Natural killer cell (primary cell): ENCODE measurements at regions of chr22 and their contacts with region 1.

Region 1: DNA sequence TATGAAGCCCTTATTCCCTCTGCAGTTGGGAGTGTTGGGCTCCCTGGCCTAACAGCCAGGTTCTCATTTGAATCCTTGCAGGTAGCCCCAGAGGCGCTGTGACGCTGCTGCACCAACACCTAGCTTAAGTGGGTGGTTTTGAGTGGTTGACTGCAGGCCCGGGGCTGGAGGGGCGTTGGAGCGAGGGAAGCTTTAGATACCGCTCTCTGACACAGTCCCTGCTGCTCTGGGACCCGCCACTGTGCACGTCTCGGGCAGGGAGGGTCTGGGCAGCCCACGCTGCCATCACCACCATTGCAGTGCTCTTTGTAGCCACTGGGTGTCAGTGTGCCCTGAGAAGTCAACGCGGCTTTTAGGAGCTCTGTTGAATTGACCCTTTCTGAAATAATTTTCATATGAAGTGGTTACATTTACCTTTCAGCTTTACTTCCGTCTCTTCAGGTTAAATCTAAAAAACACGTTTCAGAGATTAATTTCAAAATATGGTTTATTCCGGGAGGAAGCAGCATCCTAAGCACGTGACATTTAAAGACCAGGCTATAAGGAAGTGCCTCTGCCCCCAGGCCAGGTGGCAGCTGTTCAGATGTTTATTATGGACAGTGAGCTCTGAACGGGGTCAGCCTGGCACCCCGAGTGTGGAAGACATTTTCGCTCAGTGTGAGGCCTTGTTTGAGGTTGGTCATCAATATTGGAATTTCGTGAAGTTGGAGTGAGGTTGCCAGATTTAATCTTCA is 30.9 kb upstream of the PARVB start:
- DNase-seq: peak; percentile 47 to 82
- ATAC-seq: peak; percentile 65 to 80 (median 76)
- H3K4me3 ChIP-seq: no peak overlapping the region
- H3K4me3 Mint-ChIP-seq: peak overlapping the region; percentile 64
- H3K27ac ChIP-seq: no peak overlapping the region
- H3K27ac Mint-ChIP-seq: peak overlapping the region; percentile 16 to 92
- H3K4me1 ChIP-seq: peaks cover 20% of the 10 kb centered on the region
- H3K4me1 Mint-ChIP-seq: peaks cover 21 to 29% of the 10 kb centered on the region in 2 donors
- H3K27me3 ChIP-seq: no peaks in the 10 kb centered on the region
- H3K27me3 Mint-ChIP-seq: no peaks in the 10 kb centered on the region
- CTCF ChIP-seq: peak; percentile 87

Region 2: DNA sequence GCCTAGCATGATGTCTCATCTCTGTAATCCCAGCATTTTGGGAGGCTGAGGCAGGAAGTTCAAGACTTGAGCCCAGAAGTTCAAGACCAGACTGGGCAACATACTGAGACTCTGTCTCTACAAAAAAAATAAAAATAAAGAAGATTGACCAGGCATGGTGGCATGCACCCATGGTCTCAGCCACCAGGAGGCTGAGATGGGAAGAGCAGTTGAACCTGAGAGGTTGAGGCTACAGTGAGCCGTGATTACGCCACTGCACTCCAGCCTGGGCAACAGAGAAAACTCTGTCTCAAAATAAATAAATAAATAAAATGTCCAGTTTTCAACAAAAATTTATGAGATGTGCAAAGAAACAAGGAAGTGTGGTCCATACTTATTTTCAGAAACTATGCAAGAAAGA is 209.4 kb before region 1 on chr22:
- intact Hi-C with region 1: no loop called
- DNase-seq: no peak
- ATAC-seq: no peak
- H3K4me3 ChIP-seq: no peak overlapping the region
- H3K4me3 Mint-ChIP-seq: no peak overlapping the region
- H3K27ac ChIP-seq: no peak overlapping the region
- H3K27ac Mint-ChIP-seq: no peak overlapping the region
- H3K4me1 ChIP-seq: no peaks in the 10 kb centered on the region
- H3K4me1 Mint-ChIP-seq: no peaks in the 10 kb centered on the region
- H3K27me3 ChIP-seq: no peaks in the 10 kb centered on the region
- H3K27me3 Mint-ChIP-seq: peaks cover 14 to 36% of the 10 kb centered on the region in 2 donors
- CTCF ChIP-seq: no peak

Region 3: GRCh38 chr22:43862074-43862881 is 130.9 kb before region 1 on chr22 and contains the start of gene SULT4A1:
- intact Hi-C with region 1: no loop called
- DNase-seq: peak in 1 of 2 donors; percentile 36
- ATAC-seq: peak in 1 of 3 donors; percentile 24
- H3K4me3 ChIP-seq: no peak within 1 kb of the TSS
- H3K4me3 Mint-ChIP-seq: peak within 1 kb of the TSS; percentile 71
- H3K27ac ChIP-seq: no peak within 1 kb of the TSS
- H3K27ac Mint-ChIP-seq: no peak within 1 kb of the TSS
- H3K4me1 ChIP-seq: no peaks in the 10 kb centered on the region
- H3K4me1 Mint-ChIP-seq: no peaks in the 10 kb centered on the region
- H3K27me3 ChIP-seq: peaks cover 16% of the 10 kb centered on the region
- H3K27me3 Mint-ChIP-seq: peaks cover 47 to 49% of the 10 kb centered on the region in 2 donors
- CTCF ChIP-seq: no peak
- total RNA-seq, gene SULT4A1: not detected

Region 4: DNA sequence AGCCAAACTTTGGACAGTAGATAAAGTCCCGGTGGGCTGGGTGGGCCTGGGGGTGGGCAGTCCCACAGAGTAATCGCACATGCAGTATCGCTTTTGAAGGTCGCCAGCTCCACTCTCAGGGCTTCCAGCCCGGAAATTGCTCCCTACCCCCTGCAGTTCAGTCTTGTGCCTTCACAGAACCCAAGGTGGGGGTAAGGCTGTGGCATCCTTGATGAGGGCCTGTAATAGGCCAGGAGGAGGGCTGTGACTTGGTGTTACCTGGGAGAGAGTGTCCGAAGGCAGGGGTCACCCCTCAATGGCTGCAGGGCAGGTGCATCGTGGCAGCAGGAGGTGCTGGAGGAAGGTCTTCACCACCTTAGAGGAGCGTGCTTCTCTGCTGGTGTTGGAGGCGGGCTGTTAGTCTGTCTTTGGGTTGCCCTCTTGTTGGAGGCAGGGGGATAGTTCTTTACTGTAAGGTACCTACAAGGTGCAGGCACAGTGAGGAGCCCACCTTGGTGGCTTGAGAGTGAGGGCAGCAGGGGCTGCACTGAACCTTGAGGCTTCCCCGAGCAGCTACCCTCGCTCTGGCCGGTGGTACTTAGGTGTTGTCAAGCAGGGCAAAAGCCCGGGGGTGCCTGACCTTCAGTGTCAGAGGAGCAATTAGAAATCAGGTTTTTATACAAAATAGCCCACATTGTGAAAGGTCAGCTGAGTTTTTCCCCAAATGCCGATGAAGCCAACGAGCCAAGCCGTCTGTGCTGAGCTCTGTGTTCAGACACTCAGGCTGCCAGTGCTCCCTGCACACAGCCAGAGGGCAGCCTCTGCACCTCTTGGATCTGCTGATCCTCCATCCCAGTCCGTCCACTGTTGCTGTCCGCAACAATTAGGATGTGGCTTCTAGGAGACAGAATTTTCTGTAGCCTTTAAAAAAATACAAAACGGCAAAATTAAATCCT is 16.1 kb before region 1 on chr22:
- intact Hi-C with region 1: no loop called
- DNase-seq: no peak
- ATAC-seq: no peak
- H3K4me3 ChIP-seq: no peak overlapping the region
- H3K4me3 Mint-ChIP-seq: no peak overlapping the region
- H3K27ac ChIP-seq: no peak overlapping the region
- H3K27ac Mint-ChIP-seq: no peak overlapping the region
- H3K4me1 ChIP-seq: no peaks in the 10 kb centered on the region
- H3K4me1 Mint-ChIP-seq: peaks cover 0 to 3% of the 10 kb centered on the region in 2 donors
- H3K27me3 ChIP-seq: no peaks in the 10 kb centered on the region
- H3K27me3 Mint-ChIP-seq: no peaks in the 10 kb centered on the region
- CTCF ChIP-seq: no peak

Region 5: GRCh38 chr22:44080936-44081861 is 88.0 kb after region 1 on chr22:
- intact Hi-C with region 1: loop called (anchors 1 kb)
- DNase-seq: peak; percentile 59 to 84
- ATAC-seq: peak in 2 of 3 donors; percentile 69 to 80
- H3K4me3 ChIP-seq: no peak overlapping the region
- H3K4me3 Mint-ChIP-seq: no peak overlapping the region
- H3K27ac ChIP-seq: no peak overlapping the region
- H3K27ac Mint-ChIP-seq: no peak overlapping the region
- H3K4me1 ChIP-seq: no peaks in the 10 kb centered on the region
- H3K4me1 Mint-ChIP-seq: no peaks in the 10 kb centered on the region
- H3K27me3 ChIP-seq: no peaks in the 10 kb centered on the region
- H3K27me3 Mint-ChIP-seq: no peaks in the 10 kb centered on the region
- CTCF ChIP-seq: peak; percentile 85

Region 6: DNA sequence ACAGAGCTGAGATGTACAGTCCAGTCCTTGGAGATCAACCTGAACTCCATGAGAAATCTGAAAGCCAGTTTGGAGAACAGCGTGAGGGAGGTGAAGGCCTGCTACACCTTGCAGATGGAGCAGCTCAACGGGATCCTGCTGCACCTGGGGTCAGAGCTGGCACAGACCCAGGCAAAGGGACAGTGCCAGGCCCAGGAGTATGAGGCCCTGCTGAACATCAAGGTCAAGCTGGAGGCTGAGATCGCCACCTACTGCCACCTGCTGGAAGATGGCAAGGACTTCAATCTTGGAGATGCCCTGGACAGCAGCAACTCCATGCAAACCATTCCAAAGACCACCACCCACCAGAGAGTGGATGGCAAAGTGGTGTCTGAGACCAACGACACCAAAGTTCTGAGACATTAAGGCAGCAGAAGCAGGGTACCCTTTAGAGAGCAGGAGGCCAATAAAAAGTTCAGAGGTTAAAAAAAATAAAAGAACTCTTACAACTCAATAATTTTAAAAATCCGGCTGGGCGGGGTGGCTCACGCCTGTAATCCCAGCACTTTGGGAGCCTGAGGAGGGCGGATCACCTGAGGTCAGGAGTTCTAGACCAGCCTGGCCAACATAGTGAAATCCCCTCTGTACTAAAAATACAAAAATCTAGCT is 574.8 kb after region 1 on chr22:
- intact Hi-C with region 1: loop called (anchors 1 kb)
- DNase-seq: peak; percentile 35 to 72
- ATAC-seq: no peak
- H3K4me3 ChIP-seq: no peak overlapping the region
- H3K4me3 Mint-ChIP-seq: no peak overlapping the region
- H3K27ac ChIP-seq: no peak overlapping the region
- H3K27ac Mint-ChIP-seq: no peak overlapping the region
- H3K4me1 ChIP-seq: no peaks in the 10 kb centered on the region
- H3K4me1 Mint-ChIP-seq: no peaks in the 10 kb centered on the region
- H3K27me3 ChIP-seq: no peaks in the 10 kb centered on the region
- H3K27me3 Mint-ChIP-seq: peaks cover 6 to 8% of the 10 kb centered on the region in 2 donors
- CTCF ChIP-seq: peak; percentile 73

Region 7: DNA sequence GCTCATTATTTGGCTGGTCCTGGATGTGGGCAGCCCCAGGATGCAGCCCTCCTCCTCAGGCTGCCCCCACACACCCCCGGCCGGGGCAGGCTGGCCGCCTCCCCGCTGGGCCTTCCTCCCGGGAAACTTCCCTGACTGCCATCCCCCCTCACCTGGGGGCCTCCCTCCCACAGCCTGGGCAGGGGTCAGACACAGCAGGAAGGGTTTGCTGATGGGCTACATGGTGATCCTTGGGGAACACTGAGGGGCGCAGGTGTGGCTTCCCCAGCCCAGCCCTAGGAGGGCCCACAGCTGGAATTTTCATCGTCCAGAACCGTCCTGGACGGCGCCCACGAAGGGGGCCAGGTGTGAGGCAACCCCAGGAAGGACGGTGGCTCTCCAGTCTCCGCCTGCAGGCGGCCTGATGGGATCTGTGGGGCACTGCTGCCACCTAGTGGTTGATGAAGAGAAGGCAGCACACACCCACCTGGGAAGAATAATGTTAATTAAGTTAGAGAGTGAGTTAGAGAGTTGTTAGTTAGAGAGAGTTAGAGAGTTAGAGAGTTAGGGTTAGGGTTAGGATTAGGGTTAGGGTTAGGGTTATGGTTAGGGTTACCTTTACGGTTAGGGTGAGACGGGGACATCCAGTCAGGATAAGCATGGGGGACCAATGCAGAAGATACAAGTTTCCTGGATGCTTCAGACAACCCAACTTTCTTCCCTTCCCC is 632.9 kb after region 1 on chr22:
- intact Hi-C with region 1: loop called (anchors 1 kb)
- DNase-seq: peak; percentile 76 to 91
- ATAC-seq: peak; percentile 84 to 87 (median 86)
- H3K4me3 ChIP-seq: no peak overlapping the region
- H3K4me3 Mint-ChIP-seq: no peak overlapping the region
- H3K27ac ChIP-seq: no peak overlapping the region
- H3K27ac Mint-ChIP-seq: peak overlapping the region in 1 of 2 donors; percentile 12
- H3K4me1 ChIP-seq: peaks cover 9% of the 10 kb centered on the region
- H3K4me1 Mint-ChIP-seq: peaks cover 7 to 18% of the 10 kb centered on the region in 2 donors
- H3K27me3 ChIP-seq: no peaks in the 10 kb centered on the region
- H3K27me3 Mint-ChIP-seq: peaks cover 0 to 2% of the 10 kb centered on the region in 2 donors
- CTCF ChIP-seq: peak; percentile 99

Region 8: DNA sequence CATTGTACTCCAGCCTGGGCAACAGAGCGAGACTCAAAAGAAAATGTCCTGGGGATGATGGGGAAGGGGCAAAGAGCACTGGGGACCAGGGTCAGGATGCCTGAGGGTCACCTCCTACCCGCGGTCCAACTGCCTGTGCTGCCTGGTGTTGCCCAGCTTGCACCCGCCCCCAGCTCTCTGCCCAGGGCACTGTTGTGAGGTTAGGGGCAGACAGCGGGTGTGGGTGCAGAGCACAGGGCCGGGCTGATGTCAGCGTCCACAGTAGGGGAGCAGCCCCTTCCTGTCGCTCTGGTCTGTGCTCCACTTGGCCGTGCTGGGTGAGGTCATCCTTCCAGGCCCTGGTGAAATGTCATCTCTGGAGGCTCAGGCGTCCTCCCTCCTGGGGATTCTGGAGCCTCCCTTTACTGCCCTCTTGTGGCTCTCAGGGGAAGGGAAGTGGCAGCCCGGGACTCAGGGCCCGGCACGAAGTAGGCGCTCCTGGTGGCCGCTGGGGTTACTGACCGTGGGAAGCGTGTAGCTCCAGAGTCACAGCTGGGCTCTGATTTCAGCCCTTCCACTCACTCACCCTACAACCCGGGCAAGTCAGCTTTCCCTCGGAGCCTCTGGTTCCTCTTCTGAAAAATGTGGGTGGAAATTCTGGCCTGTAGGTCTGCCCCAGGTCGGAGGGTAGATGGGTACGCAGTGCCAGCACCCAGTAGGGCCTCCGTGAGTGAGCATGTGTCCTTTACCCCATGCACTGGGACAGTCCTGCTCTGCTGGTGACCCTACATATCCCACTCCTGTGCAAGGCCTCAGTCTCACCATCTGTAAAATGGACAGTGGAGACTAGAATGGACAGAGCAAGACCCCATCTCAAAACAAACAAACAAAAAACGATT is 691.6 kb after region 1 on chr22:
- intact Hi-C with region 1: loop called (anchors 10 kb)
- DNase-seq: peak; percentile 80 to 93
- ATAC-seq: peak; percentile 85 to 93 (median 88)
- H3K4me3 ChIP-seq: no peak overlapping the region
- H3K4me3 Mint-ChIP-seq: peak overlapping the region; percentile 76
- H3K27ac ChIP-seq: peak overlapping the region; percentile 71
- H3K27ac Mint-ChIP-seq: peak overlapping the region; percentile 81 to 84
- H3K4me1 ChIP-seq: peaks cover 59% of the 10 kb centered on the region
- H3K4me1 Mint-ChIP-seq: peaks cover 47 to 75% of the 10 kb centered on the region in 2 donors
- H3K27me3 ChIP-seq: no peaks in the 10 kb centered on the region
- H3K27me3 Mint-ChIP-seq: no peaks in the 10 kb centered on the region
- CTCF ChIP-seq: peak; percentile 99